Panc1 (cell line): ENCODE measurements at regions of chr2 and their contacts with region 1.

Region 1: GRCh38 chr2:149329489-149330125 is 780 bp upstream of the LYPD6 start:
- DNase-seq: no peak
- ATAC-seq: peak; percentile 79
- H3K4me3 ChIP-seq: peak overlapping the region; percentile 61 to 66
- H3K27ac ChIP-seq: no peak overlapping the region
- H3K4me1 ChIP-seq: no peaks in the 10 kb centered on the region; the same call in 1 of the 2 replicates
- H3K27me3 ChIP-seq: peaks cover 34% of the 10 kb centered on the region
- CTCF ChIP-seq: no peak

Region 2: GRCh38 chr2:149355716-149356422 is 26.3 kb after region 1 on chr2:
- CTCF ChIA-PET with region 1: no interaction called
- POLR2A ChIA-PET with region 1: no interaction called
- in situ Hi-C with region 1: no loop called
- intact Hi-C with region 1: no loop called
- DNase-seq: no peak
- ATAC-seq: no peak
- H3K4me3 ChIP-seq: no peak overlapping the region
- H3K27ac ChIP-seq: no peak overlapping the region
- H3K4me1 ChIP-seq: no peaks in the 10 kb centered on the region
- H3K27me3 ChIP-seq: no peaks in the 10 kb centered on the region; the same call in 1 of the 2 replicates
- CTCF ChIP-seq: no peak

Region 3: DNA sequence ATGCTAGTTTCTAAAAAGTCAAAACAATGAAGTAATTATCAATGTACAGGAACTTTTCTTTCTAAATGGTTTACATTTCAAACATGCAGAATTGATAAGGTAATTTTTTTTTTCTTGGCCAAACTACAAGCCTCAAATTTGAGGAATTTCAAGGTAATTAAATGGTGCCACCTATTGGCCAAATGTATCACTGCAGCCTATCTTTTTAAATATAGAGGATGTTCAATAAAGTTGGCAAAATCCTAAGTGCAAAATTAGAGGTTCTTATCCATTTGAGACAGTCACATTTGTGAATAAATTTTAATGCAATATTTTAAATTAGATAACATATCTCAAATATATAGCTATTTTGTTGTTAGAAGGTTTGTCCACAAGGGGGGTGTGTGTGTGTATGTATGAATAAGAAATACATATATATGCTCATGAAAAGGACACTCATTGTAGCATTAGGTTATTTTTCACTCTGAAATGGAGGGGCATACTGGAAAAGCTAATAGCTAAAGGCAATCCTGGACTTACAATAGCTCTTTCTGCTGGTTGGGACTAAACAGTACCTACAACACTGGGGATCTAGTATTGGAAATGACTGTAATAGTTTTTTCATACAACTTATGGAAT is 231.8 kb after region 1 on chr2:
- CTCF ChIA-PET with region 1: no interaction called
- POLR2A ChIA-PET with region 1: no interaction called
- in situ Hi-C with region 1: no loop called
- intact Hi-C with region 1: loop called (anchors 5 kb)
- DNase-seq: no peak
- ATAC-seq: no peak
- H3K4me3 ChIP-seq: no peak overlapping the region
- H3K27ac ChIP-seq: no peak overlapping the region
- H3K4me1 ChIP-seq: peaks cover 11% of the 10 kb centered on the region
- H3K27me3 ChIP-seq: no peaks in the 10 kb centered on the region
- CTCF ChIP-seq: peak; percentile 86; the same call in 1 of the 2 replicates